ENCODE measurements at regions of chr16 and their contacts with region 1.

Region 1: DNA sequence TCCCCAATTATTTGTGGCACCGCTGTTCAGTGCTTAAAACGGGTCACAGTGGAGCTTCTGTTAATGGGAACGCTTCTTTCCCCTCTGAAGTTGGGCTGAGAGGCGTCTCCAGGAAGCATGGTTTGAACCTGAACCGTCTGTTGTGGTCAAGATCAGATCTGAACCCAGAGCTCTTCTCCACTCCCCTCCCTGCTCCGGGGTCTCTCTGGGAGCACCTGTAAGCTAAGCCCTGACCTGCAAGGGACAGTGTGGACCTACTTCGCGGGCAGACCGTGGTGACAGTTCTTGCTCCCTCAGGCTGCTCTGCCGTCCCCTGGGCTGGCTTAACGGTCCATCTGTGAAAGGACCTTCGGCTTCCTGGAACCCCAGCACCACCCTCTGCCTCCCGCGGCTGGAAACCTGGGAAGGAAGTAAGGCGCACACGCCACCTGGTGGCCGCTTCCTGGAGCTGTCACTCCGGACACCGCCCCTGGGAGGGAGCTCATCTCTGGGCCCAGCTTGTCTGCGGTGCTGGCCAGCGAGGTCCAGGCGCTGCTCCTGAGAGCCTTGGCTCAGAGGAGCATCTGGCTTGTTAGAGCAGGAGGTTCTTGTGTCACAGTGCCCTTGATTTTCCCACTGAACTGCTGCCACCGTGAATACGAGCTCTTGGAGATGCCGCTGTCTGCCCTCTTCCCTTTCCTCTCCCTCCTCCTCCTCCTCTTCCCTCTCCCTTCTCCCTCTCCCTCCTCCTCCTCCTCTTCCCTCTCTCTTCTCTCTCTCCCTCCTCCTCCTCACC is 518.5 kb upstream of the EEF2KMT start:
- DNase-seq: peak; percentile 14 to 48
- ATAC-seq: no peak
- H3K4me3 ChIP-seq: no peak overlapping the region
- H3K27ac ChIP-seq: no peak overlapping the region
- H3K4me1 ChIP-seq: no peaks in the 10 kb centered on the region
- H3K27me3 ChIP-seq: peaks cover 0 to 5% (median 0%) of the 10 kb centered on the region in 3 donors
- CTCF ChIP-seq: peak; percentile 19

Region 2: DNA sequence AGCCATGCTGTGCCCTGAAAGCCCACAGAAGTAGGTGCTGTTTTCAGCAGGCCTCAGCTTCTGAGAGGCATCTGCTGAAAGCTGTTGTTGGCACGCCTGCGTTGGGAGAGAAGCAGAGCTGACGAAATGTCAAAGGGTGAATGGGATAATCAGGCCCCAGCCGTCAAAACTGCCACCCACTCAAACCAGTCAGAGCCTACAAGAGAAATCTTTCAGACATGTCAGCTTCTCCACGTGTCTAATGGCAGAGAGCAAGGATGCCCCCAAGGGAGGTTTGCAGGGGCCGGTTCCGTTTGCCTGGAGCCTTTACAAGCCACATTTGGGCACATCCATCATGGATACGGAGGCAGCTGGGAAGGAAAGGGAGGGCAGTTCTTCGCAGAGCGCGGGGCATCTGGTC is 49.8 kb after region 1 on chr16:
- intact Hi-C with region 1: loop called in 1 of 2 experiments (anchors 5 kb)
- DNase-seq: no peak
- ATAC-seq: no peak
- H3K4me3 ChIP-seq: no peak overlapping the region
- H3K27ac ChIP-seq: no peak overlapping the region
- H3K4me1 ChIP-seq: no peaks in the 10 kb centered on the region
- H3K27me3 ChIP-seq: no peaks in the 10 kb centered on the region
- CTCF ChIP-seq: no peak

Region 3: DNA sequence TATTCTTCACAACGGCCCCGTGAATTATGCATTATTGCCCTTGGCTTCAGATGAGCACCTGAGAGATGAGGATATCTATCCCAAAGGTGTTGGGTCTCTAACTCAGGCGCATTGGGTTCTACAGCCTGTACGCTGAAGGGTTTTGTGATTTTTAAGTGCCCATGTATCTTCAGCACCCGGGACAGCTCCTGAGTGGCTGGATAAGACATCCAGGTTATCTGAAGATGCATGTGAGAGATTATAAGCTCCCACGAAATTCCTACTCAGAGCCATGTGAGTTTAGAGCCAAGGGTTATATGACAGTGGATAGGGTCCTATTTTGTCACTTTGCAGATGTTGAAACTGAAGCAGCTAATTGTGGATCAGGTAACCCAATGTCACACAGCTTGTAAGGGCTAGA is 93.8 kb after region 1 on chr16:
- intact Hi-C with region 1: no loop called
- DNase-seq: no peak
- ATAC-seq: no peak
- H3K4me3 ChIP-seq: no peak overlapping the region
- H3K27ac ChIP-seq: no peak overlapping the region
- H3K4me1 ChIP-seq: no peaks in the 10 kb centered on the region
- H3K27me3 ChIP-seq: no peaks in the 10 kb centered on the region
- CTCF ChIP-seq: no peak

Measured in psoas muscle (tissue), 8 donors.